HepG2 (cell line): ENCODE measurements at regions of chr20 and their contacts with region 1.

Region 1: DNA sequence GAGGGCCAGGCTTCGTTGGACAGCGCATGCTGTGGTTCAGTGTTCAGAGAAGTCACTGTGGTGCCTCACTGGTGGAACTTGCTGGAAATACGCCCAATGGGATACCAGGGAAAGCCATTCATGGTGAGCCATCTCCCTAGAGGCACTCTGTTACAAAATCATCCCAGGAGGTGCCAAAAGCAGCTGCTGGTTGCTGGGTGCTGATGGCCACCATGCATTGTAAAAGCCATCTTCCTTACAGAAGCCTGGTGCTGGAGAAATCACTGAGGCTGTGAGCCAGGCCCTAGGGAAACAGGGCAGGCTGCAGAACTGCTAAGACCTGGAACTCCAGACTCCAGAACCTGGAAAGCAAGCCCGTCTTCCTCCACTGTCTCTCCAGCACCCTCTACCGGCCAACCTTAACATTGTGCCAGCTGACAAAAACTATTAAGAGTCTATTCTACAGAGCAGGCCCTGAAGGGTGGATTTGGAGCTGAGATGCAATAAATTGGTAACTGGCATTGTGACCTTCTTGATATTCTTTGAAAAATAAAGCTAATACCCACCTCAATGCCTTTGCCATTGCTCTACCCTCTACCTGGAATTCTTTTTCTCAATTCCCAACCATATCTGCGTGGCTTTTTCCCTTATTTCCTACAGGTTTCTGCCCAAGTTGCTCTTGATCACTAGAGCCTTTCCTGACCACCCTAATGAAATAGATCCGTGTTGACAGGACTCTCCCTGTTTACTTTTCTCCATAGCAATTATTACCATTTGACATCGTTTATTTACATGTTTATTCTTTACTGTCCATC is 18.5 kb downstream of the SNRPB start:
- DNase-seq: peak; percentile 78
- ATAC-seq: peak; percentile 84
- H3K4me3 ChIP-seq: no peak overlapping the region
- H3K27ac ChIP-seq: no peak overlapping the region
- H3K4me1 ChIP-seq: no peaks in the 10 kb centered on the region
- H3K27me3 ChIP-seq: no peaks in the 10 kb centered on the region
- CTCF ChIP-seq: peak; percentile 93
- EP300 ChIP-seq: no peak
- POLR2A ChIP-seq: no peak
- RAD21 ChIP-seq: peak; percentile 49; the same call in 1 of the 2 replicates

Region 2: GRCh38 chr20:2387180-2387577 is 65.0 kb before region 1 on chr20:
- CTCF ChIA-PET with region 1: interaction called, 9 read pairs
- POLR2A ChIA-PET with region 1: no interaction called
- in situ Hi-C with region 1: no loop called
- intact Hi-C with region 1: loop called (anchors 1 kb)
- DNase-seq: peak; percentile 48
- ATAC-seq: peak; percentile 85
- H3K4me3 ChIP-seq: no peak overlapping the region
- H3K27ac ChIP-seq: no peak overlapping the region
- H3K4me1 ChIP-seq: no peaks in the 10 kb centered on the region
- H3K27me3 ChIP-seq: peaks cover 3 to 15% of the 10 kb centered on the region in 2 experiments; a peak in 4 of 5 replicates
- CTCF ChIP-seq: peak; percentile 79
- EP300 ChIP-seq: no peak
- POLR2A ChIP-seq: no peak
- RAD21 ChIP-seq: peak; percentile 48; the same call in 1 of the 2 replicates